Naive thymus-derived CD4-positive, alpha-beta T cell (primary cell): ENCODE measurements at regions of chr9 and their contacts with region 1.

Region 1: DNA sequence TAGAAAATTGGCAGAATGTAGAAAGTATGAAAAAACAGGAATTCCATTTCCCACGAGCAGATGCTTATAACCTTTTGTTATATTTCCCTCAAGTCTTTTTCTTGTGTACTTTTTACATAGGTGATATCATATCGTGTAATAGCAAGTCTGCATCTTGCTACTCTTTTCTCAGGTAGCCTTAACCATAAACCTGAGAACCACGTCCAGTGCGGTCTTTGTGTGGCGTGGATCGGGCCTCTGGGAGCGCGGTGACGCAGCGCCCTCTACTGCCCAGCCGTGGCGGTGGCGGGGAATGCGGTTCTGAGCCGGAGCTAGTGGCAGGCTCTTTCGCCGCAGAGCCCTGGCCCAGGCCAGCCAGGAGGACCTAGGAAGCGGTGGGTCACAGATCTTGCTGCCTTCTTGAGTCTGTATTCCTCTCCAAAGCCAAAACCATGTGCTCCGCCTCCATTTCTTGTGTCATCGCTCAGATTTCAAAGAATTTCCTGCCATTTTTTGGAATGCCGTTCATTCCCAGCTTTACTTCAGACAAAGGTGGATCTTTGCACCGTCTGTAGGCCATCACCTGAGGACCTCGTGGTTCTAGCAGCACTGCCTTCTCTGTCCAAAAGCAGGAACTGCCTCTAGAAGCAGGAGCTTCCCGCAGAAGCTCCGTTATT is 71.9 kb downstream of the MVB12B start:
- DNase-seq: peak; percentile 38 to 83 (median 62)
- ATAC-seq: peak; percentile 63
- H3K4me3 ChIP-seq: no peak overlapping the region
- H3K4me3 Mint-ChIP-seq: peak overlapping the region in 9 of 10 donors; percentile 31 to 77 (median 61)
- H3K27ac ChIP-seq: no peak overlapping the region
- H3K27ac Mint-ChIP-seq: peak overlapping the region in 8 of 9 donors; percentile 34 to 91 (median 66)
- H3K4me1 ChIP-seq: peaks cover 22 to 28% of the 10 kb centered on the region in 2 donors
- H3K4me1 Mint-ChIP-seq: peaks cover 20 to 57% (median 36%) of the 10 kb centered on the region in 7 donors
- H3K27me3 ChIP-seq: no peaks in the 10 kb centered on the region
- H3K27me3 Mint-ChIP-seq: peaks cover 0 to 16% (median 0%) of the 10 kb centered on the region in 5 donors

Region 2: GRCh38 chr9:125407974-125408900 is 990.3 kb before region 1 on chr9:
- CTCF ChIA-PET with region 1: interaction called, 5 read pairs
- POLR2A ChIA-PET with region 1: no interaction called
- intact Hi-C with region 1: loop called in 1 of 2 experiments (anchors 1 kb)
- DNase-seq: peak; percentile 33 to 85 (median 69)
- ATAC-seq: peak; percentile 76
- H3K4me3 ChIP-seq: peak overlapping the region; percentile 41
- H3K4me3 Mint-ChIP-seq: peak overlapping the region; percentile 64 to 85 (median 72)
- H3K27ac ChIP-seq: no peak overlapping the region
- H3K27ac Mint-ChIP-seq: no peak overlapping the region
- H3K4me1 ChIP-seq: no peaks in the 10 kb centered on the region
- H3K4me1 Mint-ChIP-seq: peaks cover 0 to 15% (median 13%) of the 10 kb centered on the region in 7 donors
- H3K27me3 ChIP-seq: no peaks in the 10 kb centered on the region
- H3K27me3 Mint-ChIP-seq: peaks cover 15 to 38% (median 17%) of the 10 kb centered on the region in 5 donors

Region 3: GRCh38 chr9:126183266-126183665 is 215.3 kb before region 1 on chr9:
- CTCF ChIA-PET with region 1: no interaction called
- POLR2A ChIA-PET with region 1: no interaction called
- intact Hi-C with region 1: no loop called
- DNase-seq: no peak
- ATAC-seq: no peak
- H3K4me3 ChIP-seq: no peak overlapping the region
- H3K4me3 Mint-ChIP-seq: no peak overlapping the region
- H3K27ac ChIP-seq: no peak overlapping the region
- H3K27ac Mint-ChIP-seq: no peak overlapping the region
- H3K4me1 ChIP-seq: no peaks in the 10 kb centered on the region
- H3K4me1 Mint-ChIP-seq: no peaks in the 10 kb centered on the region
- H3K27me3 ChIP-seq: peaks cover 7% of the 10 kb centered on the region in 2 donors
- H3K27me3 Mint-ChIP-seq: peaks cover 41 to 68% (median 54%) of the 10 kb centered on the region in 5 donors

Region 4: DNA sequence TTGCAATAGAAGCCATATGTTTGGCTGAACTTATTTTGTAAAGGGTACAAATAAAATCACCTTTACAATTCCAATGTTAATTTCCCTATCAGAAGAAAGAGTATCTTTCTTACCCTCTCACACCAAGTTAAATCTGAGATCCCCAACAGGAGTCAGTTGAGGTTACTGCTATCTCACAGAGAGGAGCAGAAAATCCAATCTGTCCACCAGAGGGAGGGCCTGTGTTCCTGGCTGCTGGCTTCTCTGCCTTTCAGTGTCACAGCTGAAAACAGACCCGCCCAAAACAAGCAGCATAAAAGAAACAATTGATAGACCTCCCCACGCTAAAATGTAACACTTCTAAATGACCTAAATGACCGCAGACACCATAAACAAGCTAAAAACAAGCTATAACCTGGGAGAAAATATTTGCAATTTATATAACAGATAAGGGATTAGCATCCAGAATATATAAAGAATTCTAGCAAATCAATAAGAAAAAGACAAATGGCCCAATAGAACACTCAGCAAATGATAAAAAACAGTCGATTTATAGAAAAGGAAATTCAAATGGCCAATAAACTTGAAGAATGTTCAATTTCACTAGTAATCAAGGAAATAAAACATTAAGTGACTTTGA is 96.4 kb before region 1 on chr9:
- CTCF ChIA-PET with region 1: interaction called, 8 read pairs
- POLR2A ChIA-PET with region 1: interaction called, 3 read pairs
- intact Hi-C with region 1: loop called (anchors 1 kb)
- DNase-seq: peak in 7 of 9 donors; percentile 33 to 68 (median 58)
- ATAC-seq: peak; percentile 79
- H3K4me3 ChIP-seq: no peak overlapping the region
- H3K4me3 Mint-ChIP-seq: no peak overlapping the region
- H3K27ac ChIP-seq: no peak overlapping the region
- H3K27ac Mint-ChIP-seq: peak overlapping the region in 1 of 9 donors; percentile 6
- H3K4me1 ChIP-seq: no peaks in the 10 kb centered on the region
- H3K4me1 Mint-ChIP-seq: peaks cover 3 to 8% (median 5%) of the 10 kb centered on the region in 7 donors
- H3K27me3 ChIP-seq: no peaks in the 10 kb centered on the region
- H3K27me3 Mint-ChIP-seq: peaks cover 0 to 4% (median 0%) of the 10 kb centered on the region in 5 donors

Region 5: DNA sequence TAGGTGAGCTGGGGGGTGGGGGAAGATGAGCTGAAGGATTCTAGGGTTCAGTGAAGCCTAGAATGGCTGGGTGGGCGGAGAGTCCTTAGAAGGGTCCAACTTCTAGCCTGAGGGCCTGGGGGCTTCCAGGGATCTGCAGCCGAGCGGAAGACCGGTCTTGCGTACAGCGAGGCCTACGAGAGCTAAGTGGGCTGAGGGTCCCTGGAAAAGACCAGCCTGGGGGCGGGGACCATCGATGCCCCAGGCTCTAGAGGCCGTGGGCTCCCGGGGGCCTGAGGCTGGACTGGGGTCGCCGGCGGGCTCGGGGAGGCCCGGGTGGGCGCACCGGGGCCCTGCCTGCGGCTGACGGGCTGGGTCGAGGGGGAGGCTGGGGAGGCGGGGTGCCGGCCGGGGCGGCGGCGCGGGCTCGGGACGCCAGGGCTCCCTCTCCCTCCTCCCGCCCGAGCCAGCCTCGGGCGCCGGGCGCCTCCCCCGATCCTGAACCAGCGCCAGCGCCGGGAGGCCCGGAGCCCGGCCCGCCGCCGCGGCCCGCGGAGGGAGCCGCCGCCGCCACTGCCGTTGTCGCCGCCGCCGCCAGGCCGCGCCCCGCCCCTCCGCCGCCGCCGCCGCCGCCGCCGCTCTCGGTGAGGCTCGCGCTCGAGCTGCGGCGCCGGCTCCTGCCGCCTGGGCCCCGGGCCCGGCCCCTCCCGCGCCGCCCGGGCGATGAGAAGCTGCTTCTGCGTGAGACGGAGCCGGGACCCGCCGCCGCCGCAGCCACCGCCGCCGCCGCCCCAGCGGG is 72.1 kb before region 1 on chr9 and contains the start of gene MVB12B:
- CTCF ChIA-PET with region 1: interaction called, 5 read pairs
- POLR2A ChIA-PET with region 1: no interaction called
- intact Hi-C with region 1: loop called in 1 of 2 experiments (anchors 5 kb)
- DNase-seq: peak; percentile 37 to 67 (median 57)
- ATAC-seq: peak; percentile 89
- H3K4me3 ChIP-seq: peak within 1 kb of the TSS; percentile 46
- H3K4me3 Mint-ChIP-seq: peak within 1 kb of the TSS; percentile 73 to 89 (median 87)
- H3K27ac ChIP-seq: peak within 1 kb of the TSS; percentile 59
- H3K27ac Mint-ChIP-seq: peak within 1 kb of the TSS; percentile 70 to 89 (median 84)
- H3K4me1 ChIP-seq: peaks cover 4 to 41% of the 10 kb centered on the region in 2 donors
- H3K4me1 Mint-ChIP-seq: peaks cover 7 to 39% (median 14%) of the 10 kb centered on the region in 7 donors
- H3K27me3 ChIP-seq: no peaks in the 10 kb centered on the region
- H3K27me3 Mint-ChIP-seq: peaks cover 0 to 42% (median 0%) of the 10 kb centered on the region in 5 donors
- total RNA-seq, gene MVB12B: 3.0 to 9.7 (median 4.2) TPM

Region 6: DNA sequence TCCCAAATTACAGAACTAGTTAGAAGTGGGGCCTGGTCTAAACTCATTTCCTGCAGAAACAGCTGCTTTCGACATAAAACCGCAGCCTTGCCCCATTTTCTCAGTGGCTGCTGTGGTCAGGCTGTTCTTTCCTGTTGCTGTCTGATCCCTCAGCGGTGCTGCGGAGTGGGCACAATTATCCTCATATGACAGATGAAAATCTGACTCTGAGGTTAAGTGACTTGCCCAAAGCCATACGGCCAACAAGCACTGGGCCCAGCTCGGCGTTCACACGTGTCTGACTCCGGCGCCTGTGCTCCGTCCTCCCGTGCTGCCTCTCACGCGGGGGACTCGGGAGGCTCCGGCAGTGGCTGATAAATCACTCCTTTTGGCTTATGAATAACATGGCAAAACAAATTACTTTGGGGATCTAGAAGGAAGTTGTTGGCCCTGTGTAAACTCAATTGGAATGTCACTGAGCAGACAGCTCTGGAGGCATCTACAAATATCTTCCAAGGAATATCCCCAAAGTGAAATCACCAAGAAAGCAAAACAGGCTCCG is 72.6 kb after region 1 on chr9:
- CTCF ChIA-PET with region 1: interaction called, 3 read pairs
- POLR2A ChIA-PET with region 1: no interaction called
- intact Hi-C with region 1: loop called (anchors 1 to 5 kb)
- DNase-seq: peak; percentile 39 to 80 (median 66)
- ATAC-seq: peak; percentile 90
- H3K4me3 ChIP-seq: peak overlapping the region; percentile 6
- H3K4me3 Mint-ChIP-seq: peak overlapping the region; percentile 75 to 85 (median 82)
- H3K27ac ChIP-seq: peak overlapping the region; percentile 40
- H3K27ac Mint-ChIP-seq: peak overlapping the region; percentile 76 to 94 (median 88)
- H3K4me1 ChIP-seq: peaks cover 51 to 61% of the 10 kb centered on the region in 2 donors
- H3K4me1 Mint-ChIP-seq: peaks cover 56 to 83% (median 75%) of the 10 kb centered on the region in 7 donors
- H3K27me3 ChIP-seq: no peaks in the 10 kb centered on the region
- H3K27me3 Mint-ChIP-seq: peaks cover 0 to 58% (median 0%) of the 10 kb centered on the region in 5 donors

Region 7: DNA sequence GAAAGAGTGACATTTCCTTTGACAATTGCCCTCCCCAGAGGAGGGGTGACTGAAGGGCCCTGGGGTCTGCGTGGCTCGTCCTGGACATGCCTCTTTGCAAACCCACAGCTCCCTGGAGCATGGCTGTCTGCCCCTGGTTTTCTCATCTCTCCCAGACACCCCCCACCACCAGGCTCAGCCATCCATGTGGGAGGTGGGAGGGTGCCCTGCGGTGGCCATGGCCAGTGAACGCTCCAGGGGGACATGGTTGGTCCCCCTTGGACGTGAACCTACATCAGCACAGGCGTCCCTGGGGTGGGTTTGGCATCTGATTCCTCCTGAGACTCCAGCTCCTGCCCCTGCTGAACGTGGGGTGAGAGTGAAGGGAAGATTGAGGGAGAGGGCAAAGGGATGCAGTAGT is 147.5 kb after region 1 on chr9:
- CTCF ChIA-PET with region 1: no interaction called
- POLR2A ChIA-PET with region 1: no interaction called
- intact Hi-C with region 1: no loop called
- DNase-seq: no peak
- ATAC-seq: no peak
- H3K4me3 ChIP-seq: no peak overlapping the region
- H3K4me3 Mint-ChIP-seq: no peak overlapping the region
- H3K27ac ChIP-seq: no peak overlapping the region
- H3K27ac Mint-ChIP-seq: no peak overlapping the region
- H3K4me1 ChIP-seq: no peaks in the 10 kb centered on the region
- H3K4me1 Mint-ChIP-seq: peaks cover 0 to 2% (median 0%) of the 10 kb centered on the region in 7 donors
- H3K27me3 ChIP-seq: no peaks in the 10 kb centered on the region
- H3K27me3 Mint-ChIP-seq: no peaks in the 10 kb centered on the region